PC-3 (cell line): ENCODE measurements at regions of chr5 and their contacts with region 1.

Region 1: DNA sequence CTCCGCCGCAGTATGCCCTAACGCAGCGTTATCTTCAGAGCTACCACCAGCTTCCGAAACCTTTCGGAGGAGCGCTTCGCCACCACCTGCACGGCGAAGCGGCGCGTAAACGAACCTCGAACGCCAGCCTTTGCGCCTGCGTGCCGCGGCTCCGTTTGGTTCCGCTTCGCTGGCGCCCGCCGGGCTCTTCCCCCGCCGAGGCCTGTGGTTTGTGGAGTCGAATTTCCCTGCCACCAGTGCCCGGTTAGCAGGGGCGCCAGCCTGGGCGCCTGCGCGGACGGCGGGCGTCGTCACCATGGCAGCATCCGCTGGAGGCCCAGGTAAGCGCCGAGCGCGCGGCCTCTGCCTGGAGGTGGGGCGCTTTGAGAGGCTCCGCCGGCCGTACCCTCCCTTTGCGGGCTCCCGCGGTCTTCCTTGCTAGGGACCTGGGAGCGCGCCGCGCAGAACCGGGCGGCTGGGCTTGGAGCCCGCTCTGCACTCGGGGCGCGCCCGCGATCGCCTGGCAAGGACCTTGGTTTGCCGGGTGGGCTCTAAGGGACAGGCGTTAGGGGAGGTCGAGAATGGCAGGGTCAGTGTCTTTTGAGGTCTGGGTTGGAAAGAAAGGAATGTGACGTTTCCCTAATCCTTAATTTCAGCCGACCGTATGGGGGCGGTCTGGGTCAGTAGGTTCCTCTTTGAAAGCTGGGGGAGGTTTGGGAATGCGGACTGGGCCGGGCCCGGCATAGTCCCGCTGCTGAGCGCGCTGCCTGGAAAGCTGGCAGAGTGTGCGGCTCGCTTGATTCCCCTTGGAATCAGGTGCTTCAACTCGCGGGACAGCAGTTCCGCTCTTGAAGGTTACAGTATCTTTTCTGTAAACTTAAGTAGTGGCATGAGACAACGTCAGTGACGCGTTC is at the start of gene FAM151B:
- DNase-seq: peak; percentile 94
- ATAC-seq: peak; percentile 93
- H3K4me3 ChIP-seq: peak within 1 kb of the TSS; percentile 76
- H3K27ac ChIP-seq: peak within 1 kb of the TSS; percentile 58
- H3K4me1 ChIP-seq: peaks cover 9% of the 10 kb centered on the region
- H3K27me3 ChIP-seq: no peaks in the 10 kb centered on the region
- CTCF ChIP-seq: peak; percentile 36
- total RNA-seq, gene FAM151B: 1.7 and 2.3 TPM in 2 replicates

Region 2: DNA sequence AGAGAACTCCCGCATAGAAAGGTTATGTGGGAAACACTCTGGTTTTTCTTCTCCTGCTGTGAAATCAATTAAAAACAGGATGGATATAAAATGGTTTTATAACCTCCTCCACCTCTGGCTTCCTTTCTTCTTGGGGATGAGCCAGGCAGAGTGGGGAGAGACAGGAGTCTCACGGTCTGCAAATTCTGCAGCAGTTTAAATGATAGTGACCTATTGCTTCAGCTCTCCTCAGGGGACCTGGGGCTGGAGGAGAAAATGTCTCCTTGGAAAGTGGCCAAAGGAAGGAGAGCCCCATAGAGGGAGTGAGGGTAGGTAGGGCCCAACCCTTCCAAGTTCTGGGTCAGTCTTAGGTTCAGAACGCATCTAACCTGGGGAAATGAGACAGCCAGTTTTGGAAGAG is 615.8 kb before region 1 on chr5:
- CTCF ChIA-PET with region 1: no interaction called
- POLR2A ChIA-PET with region 1: no interaction called
- intact Hi-C with region 1: no loop called
- DNase-seq: no peak
- ATAC-seq: no peak
- H3K4me3 ChIP-seq: no peak overlapping the region
- H3K27ac ChIP-seq: no peak overlapping the region
- H3K4me1 ChIP-seq: no peaks in the 10 kb centered on the region
- H3K27me3 ChIP-seq: peaks cover 48% of the 10 kb centered on the region
- CTCF ChIP-seq: no peak

Region 3: DNA sequence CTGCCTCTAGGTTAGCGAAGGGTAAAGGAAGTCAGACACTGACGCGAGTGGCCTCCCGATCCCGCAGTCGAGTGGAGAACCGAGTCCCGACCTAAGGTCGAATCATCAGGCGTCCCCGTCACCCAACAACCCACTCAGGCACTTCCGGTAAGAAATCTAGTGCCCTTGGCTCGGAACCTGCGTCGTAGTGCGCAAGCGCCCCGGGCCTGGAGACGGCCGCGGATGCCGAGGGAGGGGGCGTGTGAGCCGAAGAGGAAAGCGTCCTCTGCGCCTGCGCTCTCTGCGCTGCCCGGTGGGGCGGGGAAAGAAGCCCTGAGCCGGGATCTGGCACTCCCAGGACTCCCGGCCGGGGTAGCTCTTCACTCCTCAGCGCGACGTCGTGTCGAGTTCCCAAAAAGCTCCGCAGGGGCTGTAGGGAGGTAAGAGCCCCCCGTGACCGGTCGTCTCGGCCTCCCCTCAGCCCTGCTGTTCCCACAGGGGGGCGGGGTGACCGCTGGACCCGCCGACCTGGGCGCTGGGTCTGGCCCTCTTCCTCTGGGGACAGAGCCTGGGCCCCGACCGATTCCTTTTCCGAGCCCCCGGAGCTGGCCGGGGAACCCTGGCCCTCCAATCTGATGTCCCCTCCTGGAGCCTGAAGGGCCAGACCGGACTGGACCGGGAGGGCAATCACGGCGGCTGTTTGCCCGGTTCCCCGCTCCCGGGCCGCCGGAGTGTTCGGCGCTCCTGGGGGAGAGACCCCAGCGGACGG is 80.2 kb before region 1 on chr5 and contains the start of gene ZFYVE16:
- CTCF ChIA-PET with region 1: no interaction called
- POLR2A ChIA-PET with region 1: no interaction called
- intact Hi-C with region 1: loop called (anchors 2 kb)
- DNase-seq: peak; percentile 95
- ATAC-seq: peak; percentile 84
- H3K4me3 ChIP-seq: peak within 1 kb of the TSS; percentile 82
- H3K27ac ChIP-seq: peak within 1 kb of the TSS; percentile 87
- H3K4me1 ChIP-seq: peaks cover 7% of the 10 kb centered on the region; the same call in 1 of the 2 replicates
- H3K27me3 ChIP-seq: no peaks in the 10 kb centered on the region
- CTCF ChIP-seq: 0 out of 2 replicates have a peak, but pooled peaks have one; percentile 19
- total RNA-seq, gene ZFYVE16: 7.3 and 9.7 TPM in 2 replicates

Region 4: GRCh38 chr5:80516826-80517225 is 28.8 kb after region 1 on chr5:
- CTCF ChIA-PET with region 1: no interaction called
- POLR2A ChIA-PET with region 1: no interaction called
- intact Hi-C with region 1: loop called (anchors 1 kb)
- DNase-seq: peak; percentile 83
- ATAC-seq: peak; percentile 100
- H3K4me3 ChIP-seq: no peak overlapping the region
- H3K27ac ChIP-seq: no peak overlapping the region
- H3K4me1 ChIP-seq: peaks cover 7% of the 10 kb centered on the region
- H3K27me3 ChIP-seq: no peaks in the 10 kb centered on the region
- CTCF ChIP-seq: no peak

Region 5: GRCh38 chr5:80654391-80655230 is 166.5 kb after region 1 on chr5 and contains the starts of genes DHFR and MSH3:
- CTCF ChIA-PET with region 1: no interaction called
- POLR2A ChIA-PET with region 1: no interaction called
- intact Hi-C with region 1: loop called (anchors 1 kb)
- DNase-seq: peak; percentile 88
- ATAC-seq: peak; percentile 61
- H3K4me3 ChIP-seq: peak within 1 kb of the TSS; percentile 99
- H3K27ac ChIP-seq: peak within 1 kb of the TSS; percentile 69
- H3K4me1 ChIP-seq: peaks cover 8% of the 10 kb centered on the region
- H3K27me3 ChIP-seq: no peaks in the 10 kb centered on the region
- CTCF ChIP-seq: peak; percentile 30; the same call in 1 of the 2 replicates
- total RNA-seq, gene DHFR: 21.4 and 22.0 TPM in 2 replicates
- total RNA-seq, gene MSH3: 9.0 TPM in 2 replicates

Region 6: DNA sequence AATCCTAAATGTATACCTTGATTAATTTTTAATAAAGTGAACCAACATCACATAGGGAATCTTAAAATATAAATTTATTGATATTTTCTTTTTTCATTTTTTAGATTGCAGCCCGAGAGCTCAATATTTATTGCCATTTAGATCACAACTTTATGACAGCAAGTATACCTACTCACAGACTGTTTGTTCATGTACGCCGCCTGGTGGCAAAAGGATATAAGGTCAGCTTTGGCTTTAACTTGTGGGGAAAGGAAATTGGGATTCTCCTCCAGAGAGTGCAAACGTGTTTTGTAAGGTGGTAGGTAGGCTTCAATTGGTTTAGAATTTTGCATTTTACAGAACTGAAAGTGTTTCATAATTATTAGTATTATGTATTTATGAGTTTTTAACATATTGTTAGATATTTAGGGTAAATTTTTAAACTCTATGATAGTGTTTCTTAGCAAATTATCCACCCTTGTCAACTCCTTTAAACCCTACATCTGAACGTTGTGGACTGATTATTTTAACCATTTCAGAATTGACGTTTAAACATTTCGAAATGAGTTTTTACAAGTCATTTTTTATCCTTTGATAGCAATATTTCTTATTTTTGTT is 184.2 kb after region 1 on chr5:
- CTCF ChIA-PET with region 1: interaction called, 6 read pairs
- POLR2A ChIA-PET with region 1: no interaction called
- intact Hi-C with region 1: loop called (anchors 2 kb)
- DNase-seq: peak; percentile 79
- ATAC-seq: peak; percentile 79
- H3K4me3 ChIP-seq: no peak overlapping the region
- H3K27ac ChIP-seq: no peak overlapping the region
- H3K4me1 ChIP-seq: no peaks in the 10 kb centered on the region
- H3K27me3 ChIP-seq: no peaks in the 10 kb centered on the region
- CTCF ChIP-seq: peak; percentile 63